CD4-positive, alpha-beta T cell (primary cell): ENCODE measurements at regions of chr18 and their contacts with region 1.

Region 1: DNA sequence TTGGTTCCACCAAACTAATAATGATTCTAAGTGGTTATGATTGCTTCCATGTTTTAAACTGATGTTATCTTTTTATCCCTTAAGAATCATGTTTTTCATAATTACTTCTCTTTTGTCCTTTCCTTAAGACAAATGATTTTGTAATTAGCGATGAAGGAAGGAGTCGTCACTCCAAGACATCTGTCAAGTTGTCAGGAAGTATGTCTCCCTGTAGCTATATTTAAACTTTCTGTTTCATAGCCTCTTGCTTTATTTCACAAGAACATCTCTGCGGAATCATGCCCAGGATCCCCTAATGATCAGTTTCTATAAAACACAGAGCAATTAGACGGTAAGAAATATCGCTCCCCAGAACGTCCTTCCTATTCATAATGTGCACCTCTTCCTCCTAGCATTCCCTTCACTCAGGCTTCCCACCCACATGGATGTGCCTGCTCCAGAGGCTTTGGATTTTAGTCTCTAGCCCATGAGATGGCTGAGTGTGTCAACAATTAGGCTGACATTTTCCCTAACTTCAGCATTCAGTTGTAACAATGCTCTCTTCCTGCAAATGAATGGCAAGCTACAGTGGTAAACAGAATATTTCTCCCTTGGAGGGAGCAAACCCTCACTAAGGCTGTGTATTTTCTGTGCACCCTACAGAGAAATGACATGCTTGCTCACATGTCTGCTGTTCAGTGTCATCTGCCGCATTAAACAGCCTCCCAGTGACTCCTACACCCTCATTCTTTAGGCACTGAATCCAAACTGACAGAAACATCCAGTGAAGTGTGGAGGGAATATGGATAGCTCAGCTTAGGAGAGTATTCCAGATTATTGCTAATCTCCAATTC is 879.6 kb upstream of the CELF4 start:
- DNase-seq: no peak
- ATAC-seq: no peak
- H3K4me3 ChIP-seq: no peak overlapping the region
- H3K4me3 Mint-ChIP-seq: no peak overlapping the region
- H3K27ac ChIP-seq: no peak overlapping the region
- H3K27ac Mint-ChIP-seq: no peak overlapping the region
- H3K4me1 ChIP-seq: no peaks in the 10 kb centered on the region
- H3K4me1 Mint-ChIP-seq: no peaks in the 10 kb centered on the region
- H3K27me3 ChIP-seq: no peaks in the 10 kb centered on the region
- H3K27me3 Mint-ChIP-seq: no peaks in the 10 kb centered on the region
- CTCF ChIP-seq: no peak

Region 2: GRCh38 chr18:38402509-38402908 is 42.7 kb before region 1 on chr18:
- CTCF ChIA-PET with region 1: no interaction called
- POLR2A ChIA-PET with region 1: no interaction called
- intact Hi-C with region 1: no loop called
- DNase-seq: no peak
- ATAC-seq: no peak
- H3K4me3 ChIP-seq: no peak overlapping the region
- H3K4me3 Mint-ChIP-seq: no peak overlapping the region
- H3K27ac ChIP-seq: no peak overlapping the region
- H3K27ac Mint-ChIP-seq: no peak overlapping the region
- H3K4me1 ChIP-seq: no peaks in the 10 kb centered on the region
- H3K4me1 Mint-ChIP-seq: no peaks in the 10 kb centered on the region
- H3K27me3 ChIP-seq: no peaks in the 10 kb centered on the region
- H3K27me3 Mint-ChIP-seq: no peaks in the 10 kb centered on the region
- CTCF ChIP-seq: no peak

Region 3: DNA sequence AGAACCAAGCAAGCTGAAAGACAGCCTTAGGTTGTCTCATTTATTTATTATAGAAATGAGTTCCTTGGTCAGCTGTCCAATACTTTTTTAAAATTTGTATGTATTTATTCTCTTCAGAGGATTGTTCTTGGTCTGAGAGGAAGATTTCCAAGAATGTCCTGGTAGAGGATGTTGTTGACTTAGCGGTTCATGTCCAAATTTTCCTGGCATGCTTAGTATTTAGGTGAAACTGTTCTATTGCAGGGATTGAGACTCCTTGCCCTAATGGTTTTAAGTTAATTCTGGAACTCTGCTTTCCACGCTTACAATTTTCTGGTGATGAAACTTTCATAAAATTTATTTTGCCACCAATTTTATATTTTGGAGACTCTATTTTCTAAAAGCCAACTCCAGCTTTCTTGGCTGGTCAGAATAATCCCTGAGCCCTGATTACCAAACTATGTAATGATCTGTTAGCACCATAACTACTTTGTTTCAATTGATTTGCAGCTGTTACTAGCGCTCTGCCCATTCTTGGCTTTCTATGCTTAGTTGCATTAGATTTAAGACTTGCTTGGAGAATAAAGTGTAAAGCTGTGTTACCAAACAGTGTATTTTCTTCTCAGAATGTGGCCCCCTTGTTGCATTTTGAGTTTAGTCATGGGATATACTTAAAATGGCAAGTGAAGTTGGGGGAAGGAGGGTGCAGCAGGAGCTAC is 989.2 kb after region 1 on chr18:
- CTCF ChIA-PET with region 1: no interaction called
- POLR2A ChIA-PET with region 1: no interaction called
- intact Hi-C with region 1: loop called in 1 of 2 experiments (anchors 5 kb)
- DNase-seq: no peak
- ATAC-seq: no peak
- H3K4me3 ChIP-seq: no peak overlapping the region
- H3K4me3 Mint-ChIP-seq: no peak overlapping the region
- H3K27ac ChIP-seq: no peak overlapping the region
- H3K27ac Mint-ChIP-seq: no peak overlapping the region
- H3K4me1 ChIP-seq: no peaks in the 10 kb centered on the region
- H3K4me1 Mint-ChIP-seq: no peaks in the 10 kb centered on the region
- H3K27me3 ChIP-seq: no peaks in the 10 kb centered on the region
- H3K27me3 Mint-ChIP-seq: no peaks in the 10 kb centered on the region
- CTCF ChIP-seq: no peak